Heart right ventricle (tissue), 16 donors: ENCODE measurements at regions of chr10 and their contacts with region 1.

Region 1: GRCh38 chr10:49290607-49291006 is 8.4 kb upstream of the C10orf71 start:
- DNase-seq: no peak
- ATAC-seq: peak in 4 of 8 donors; percentile 21 to 53 (median 49)
- H3K4me3 ChIP-seq: no peak overlapping the region
- H3K27ac ChIP-seq: peak overlapping the region in 8 of 10 donors; percentile 37 to 72 (median 54)
- H3K4me1 ChIP-seq: peaks cover 0 to 54% (median 23%) of the 10 kb centered on the region in 9 donors
- H3K27me3 ChIP-seq: no peaks in the 10 kb centered on the region
- CTCF ChIP-seq: no peak

Region 2: GRCh38 chr10:49187950-49188761 is 102.5 kb before region 1 on chr10 and contains the start of gene TMEM273:
- intact Hi-C with region 1: loop called in 5 of 10 experiments (anchors 5 to 10 kb)
- DNase-seq: peak; percentile 81 to 88
- ATAC-seq: peak; percentile 97 to 98 (median 98)
- H3K4me3 ChIP-seq: peak within 1 kb of the TSS in 9 of 10 donors; percentile 27 to 58 (median 49)
- H3K27ac ChIP-seq: peak within 1 kb of the TSS; percentile 17 to 88 (median 80)
- H3K4me1 ChIP-seq: peaks cover 7 to 81% (median 64%) of the 10 kb centered on the region in 9 donors
- H3K27me3 ChIP-seq: no peaks in the 10 kb centered on the region
- CTCF ChIP-seq: peak in 3 of 9 donors; percentile 20 to 30 (median 24)
- total RNA-seq, gene TMEM273: 10.9 to 27.3 (median 18.6) TPM